ENCODE measurements at regions of chr11 and their contacts with region 1.

Region 1: GRCh38 chr11:16547879-16548278 is 190.6 kb upstream of the C11orf58 start:
- DNase-seq: no peak
- H3K4me3 Mint-ChIP-seq: no peak overlapping the region
- H3K27ac Mint-ChIP-seq: no peak overlapping the region
- H3K4me1 Mint-ChIP-seq: no peaks in the 10 kb centered on the region
- H3K27me3 Mint-ChIP-seq: no peaks in the 10 kb centered on the region

Region 2: GRCh38 chr11:16596231-16596630 is 48.4 kb after region 1 on chr11:
- intact Hi-C with region 1: loop called (anchors 5 kb)
- DNase-seq: no peak
- H3K4me3 Mint-ChIP-seq: no peak overlapping the region
- H3K27ac Mint-ChIP-seq: no peak overlapping the region
- H3K4me1 Mint-ChIP-seq: no peaks in the 10 kb centered on the region
- H3K27me3 Mint-ChIP-seq: peaks cover 18% of the 10 kb centered on the region